ENCODE measurements at regions of chr5 and their contacts with region 1.

Region 1: DNA sequence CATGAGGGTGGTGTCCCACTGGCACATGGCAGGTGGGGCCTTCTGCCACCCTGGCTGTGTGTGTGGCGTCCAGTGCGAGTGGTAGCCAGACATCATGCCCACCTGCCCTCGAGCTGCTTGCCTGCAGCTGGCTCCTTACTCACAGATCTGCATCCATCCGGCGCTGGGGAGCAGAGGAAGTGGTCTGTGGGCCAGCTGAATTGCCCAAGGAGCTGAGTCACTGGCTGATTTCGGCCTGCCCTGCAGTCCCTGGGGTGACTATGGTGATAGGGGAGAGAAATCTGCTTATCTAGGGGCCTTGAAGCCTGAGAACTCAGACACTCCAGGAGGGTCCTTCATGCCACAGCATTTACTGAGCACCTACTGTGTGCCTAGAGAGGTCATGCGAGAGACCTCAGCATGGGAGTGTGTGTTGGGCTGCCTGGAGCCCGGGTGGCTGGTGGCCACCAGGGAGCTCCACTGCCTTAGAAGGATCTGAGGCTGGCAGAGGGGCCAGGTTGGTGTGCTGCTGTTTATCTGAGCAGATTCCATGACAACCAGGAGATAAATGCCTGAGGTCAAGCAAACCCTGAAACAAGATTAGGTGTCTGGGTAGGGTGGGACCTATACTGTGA is 57.1 kb downstream of the SLC22A5 start:
- DNase-seq: peak; percentile 85
- ATAC-seq: peak; percentile 59
- H3K4me3 Mint-ChIP-seq: peak overlapping the region; percentile 74
- H3K27ac Mint-ChIP-seq: peak overlapping the region; percentile 98
- H3K4me1 Mint-ChIP-seq: peaks cover 99% of the 10 kb centered on the region
- H3K27me3 Mint-ChIP-seq: no peaks in the 10 kb centered on the region

Region 2: DNA sequence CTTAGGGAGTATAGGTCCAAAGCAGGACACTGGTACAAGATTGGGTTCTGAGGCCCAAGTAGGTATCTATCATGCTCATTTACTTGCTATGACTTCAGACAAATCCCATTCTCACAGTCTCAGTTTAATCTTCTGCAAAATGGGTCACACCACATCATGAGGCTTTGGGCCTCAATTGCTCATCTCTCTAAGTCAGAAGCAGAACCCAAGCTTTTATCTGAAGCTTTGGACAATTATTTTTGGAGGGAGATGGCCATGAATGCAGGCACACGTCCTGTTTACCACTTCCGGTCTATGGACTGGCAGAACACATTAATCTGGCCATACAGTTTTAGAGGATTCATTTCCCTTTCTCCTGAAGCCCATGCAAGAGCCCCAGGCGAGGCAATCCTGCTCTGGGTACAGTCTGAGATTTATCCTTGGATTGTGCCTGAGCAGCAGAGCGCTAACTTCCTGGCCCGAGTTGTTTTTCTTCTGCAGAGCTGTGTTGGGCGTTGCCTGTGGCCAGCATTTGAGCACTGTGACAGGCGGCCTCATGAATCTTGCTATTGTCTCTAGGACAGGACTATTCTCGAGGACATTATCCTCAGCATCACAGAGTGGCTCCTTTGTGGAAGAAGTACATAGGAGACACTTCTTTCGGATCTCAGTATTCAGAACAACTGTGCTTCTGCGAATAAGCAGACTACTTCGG is 116.3 kb before region 1 on chr5:
- CTCF ChIA-PET with region 1: no interaction called
- POLR2A ChIA-PET with region 1: no interaction called
- DNase-seq: no peak
- ATAC-seq: no peak
- H3K4me3 Mint-ChIP-seq: no peak overlapping the region
- H3K27ac Mint-ChIP-seq: no peak overlapping the region
- H3K4me1 Mint-ChIP-seq: no peaks in the 10 kb centered on the region
- H3K27me3 Mint-ChIP-seq: peaks cover 3% of the 10 kb centered on the region

Region 3: GRCh38 chr5:132437604-132438266 is 11.1 kb after region 1 on chr5:
- CTCF ChIA-PET with region 1: interaction called, 60 read pairs
- POLR2A ChIA-PET with region 1: interaction called, 57 read pairs
- DNase-seq: peak; percentile 84
- ATAC-seq: peak; percentile 94
- H3K4me3 Mint-ChIP-seq: peak overlapping the region; percentile 66
- H3K27ac Mint-ChIP-seq: peak overlapping the region; percentile 83
- H3K4me1 Mint-ChIP-seq: peaks cover 90% of the 10 kb centered on the region
- H3K27me3 Mint-ChIP-seq: no peaks in the 10 kb centered on the region

Region 4: GRCh38 chr5:132473019-132473531 is 46.4 kb after region 1 on chr5:
- CTCF ChIA-PET with region 1: interaction called, 63 read pairs
- POLR2A ChIA-PET with region 1: interaction called, 435 read pairs
- DNase-seq: peak; percentile 95
- ATAC-seq: peak; percentile 63
- H3K4me3 Mint-ChIP-seq: peak overlapping the region; percentile 42
- H3K27ac Mint-ChIP-seq: peak overlapping the region; percentile 94
- H3K4me1 Mint-ChIP-seq: peaks cover 92% of the 10 kb centered on the region
- H3K27me3 Mint-ChIP-seq: no peaks in the 10 kb centered on the region

Region 5: GRCh38 chr5:132495667-132496190 is 69.1 kb after region 1 on chr5:
- CTCF ChIA-PET with region 1: interaction called, 52 read pairs
- POLR2A ChIA-PET with region 1: interaction called, 435 read pairs
- DNase-seq: peak; percentile 87
- ATAC-seq: peak; percentile 59
- H3K4me3 Mint-ChIP-seq: peak overlapping the region; percentile 83
- H3K27ac Mint-ChIP-seq: peak overlapping the region; percentile 95
- H3K4me1 Mint-ChIP-seq: peaks cover 77% of the 10 kb centered on the region
- H3K27me3 Mint-ChIP-seq: no peaks in the 10 kb centered on the region

Region 6: DNA sequence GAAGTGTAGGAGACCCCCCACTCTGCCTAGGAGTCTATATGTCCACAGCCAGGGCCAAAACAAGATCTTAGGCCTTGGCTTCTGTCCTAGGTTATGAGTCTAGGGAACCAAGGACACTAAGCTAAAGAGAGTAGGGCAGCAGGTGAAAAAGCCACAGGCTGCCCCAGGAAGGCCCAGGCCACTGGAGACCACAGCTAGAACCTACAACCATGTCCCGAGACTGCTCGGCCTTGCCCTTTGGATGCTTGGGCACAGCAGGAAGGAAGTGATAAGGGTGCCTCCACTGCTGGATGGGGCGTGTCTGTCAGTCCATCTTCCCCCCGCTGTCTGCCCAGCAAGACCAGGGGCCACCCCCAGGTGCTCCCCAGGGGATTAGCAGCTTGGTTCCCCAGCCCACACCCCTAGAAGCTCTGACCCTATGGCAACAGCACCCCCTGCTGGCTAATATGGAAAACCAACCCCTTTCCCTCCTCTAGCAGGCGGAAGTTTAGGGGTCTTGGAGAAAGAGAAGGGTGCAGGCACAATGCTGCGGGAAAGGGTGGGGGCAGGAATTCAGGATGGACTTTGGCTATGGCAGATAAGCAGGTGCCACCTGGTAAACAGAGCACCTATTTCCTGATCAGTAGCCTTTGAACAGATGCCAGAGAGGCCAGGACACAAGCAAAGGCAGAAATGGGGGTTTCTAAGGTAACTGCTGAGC is 74.4 kb after region 1 on chr5:
- CTCF ChIA-PET with region 1: interaction called, 29 read pairs
- POLR2A ChIA-PET with region 1: interaction called, 81 read pairs
- DNase-seq: peak; percentile 85
- ATAC-seq: peak; percentile 25
- H3K4me3 Mint-ChIP-seq: no peak overlapping the region
- H3K27ac Mint-ChIP-seq: peak overlapping the region; percentile 81
- H3K4me1 Mint-ChIP-seq: peaks cover 45% of the 10 kb centered on the region
- H3K27me3 Mint-ChIP-seq: peaks cover 5% of the 10 kb centered on the region

Measured in activated CD8-positive, alpha-beta T cell treated with anti-CD3 and anti-CD28 coated beads, Interleukin-2, amount 10 ng/mL, durations not matched to agents 7 days and 5 days (primary cell).